PC-9 (cell line): ENCODE measurements at regions of chr16 and their contacts with region 1.

Region 1: GRCh38 chr16:84785843-84786581 is 33.8 kb upstream of the CRISPLD2 start:
- DNase-seq: peak; percentile 75 to 93
- H3K4me3 ChIP-seq: no peak overlapping the region
- H3K27ac ChIP-seq: peak overlapping the region; percentile 21; the same call in 1 of the 2 replicates
- H3K4me1 ChIP-seq: peaks cover 26% of the 10 kb centered on the region
- H3K27me3 ChIP-seq: no peaks in the 10 kb centered on the region
- CTCF ChIP-seq: no peak

Region 2: GRCh38 chr16:83971165-83972130 is 814.6 kb before region 1 on chr16:
- CTCF ChIA-PET with region 1: no interaction called
- POLR2A ChIA-PET with region 1: no interaction called
- intact Hi-C with region 1: no loop called
- DNase-seq: no peak
- H3K4me3 ChIP-seq: no peak overlapping the region
- H3K27ac ChIP-seq: no peak overlapping the region
- H3K4me1 ChIP-seq: no peaks in the 10 kb centered on the region
- H3K27me3 ChIP-seq: no peaks in the 10 kb centered on the region
- CTCF ChIP-seq: no peak

Region 3: DNA sequence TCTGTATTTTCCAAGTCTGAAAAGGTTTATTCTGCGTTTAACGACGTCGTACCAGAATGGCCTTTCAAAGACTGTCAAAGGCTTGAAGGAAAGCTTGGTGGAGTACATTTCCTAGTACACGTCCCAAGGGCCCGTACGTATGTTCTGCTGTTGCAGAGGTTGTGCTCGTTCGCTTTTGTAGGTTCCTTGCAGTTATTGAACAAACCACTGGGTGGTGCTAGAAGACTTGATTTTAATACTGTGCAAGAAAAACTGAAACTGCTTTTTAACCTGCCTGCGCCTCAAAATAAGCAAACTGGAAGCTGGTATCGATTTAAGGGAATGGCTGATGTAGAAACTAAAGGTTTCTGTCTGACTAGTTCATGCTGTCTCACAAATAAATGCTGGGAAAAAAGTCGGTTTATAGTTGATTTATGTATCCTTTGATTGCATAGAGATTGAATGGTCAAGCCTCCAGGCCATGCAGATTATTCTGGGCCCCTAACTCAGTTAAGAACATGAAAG is 31.6 kb before region 1 on chr16:
- CTCF ChIA-PET with region 1: interaction called, 10 read pairs
- POLR2A ChIA-PET with region 1: no interaction called
- intact Hi-C with region 1: no loop called
- DNase-seq: peak; percentile 61 to 75
- H3K4me3 ChIP-seq: no peak overlapping the region
- H3K27ac ChIP-seq: peak overlapping the region; percentile 22
- H3K4me1 ChIP-seq: peaks cover 11% of the 10 kb centered on the region; the same call in 1 of the 2 replicates
- H3K27me3 ChIP-seq: no peaks in the 10 kb centered on the region
- CTCF ChIP-seq: peak; percentile 92

Region 4: DNA sequence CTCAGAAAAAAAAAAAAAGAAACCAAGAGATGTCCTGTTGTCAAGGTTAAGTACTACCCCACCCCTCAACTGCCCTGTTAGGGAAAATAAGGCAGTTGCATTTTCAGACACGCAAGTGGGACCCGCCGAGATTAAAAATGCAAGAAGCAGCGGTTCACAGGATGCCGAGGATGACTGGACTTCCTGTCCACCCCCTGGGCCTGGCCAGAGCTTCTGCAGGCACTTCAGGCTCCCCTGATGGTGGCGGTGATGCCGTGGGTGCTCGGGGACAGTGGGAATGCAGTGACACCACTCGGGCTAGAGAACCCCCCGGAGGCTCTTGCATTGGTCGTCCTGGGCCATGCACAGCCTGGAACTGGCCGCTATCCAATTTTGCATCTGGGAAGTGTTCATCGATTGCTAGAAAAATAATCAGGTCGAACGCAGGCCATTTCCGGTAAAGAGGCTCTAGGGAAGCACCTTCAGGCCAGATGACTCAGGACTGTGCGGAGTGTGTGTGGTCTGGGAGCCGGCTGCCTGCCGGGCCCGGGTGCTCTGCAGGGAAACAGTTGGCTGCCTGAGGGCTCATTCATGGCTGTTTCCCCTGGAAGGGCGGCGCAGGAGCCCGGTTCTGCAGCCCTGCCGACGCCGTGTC is 20.4 kb after region 1 on chr16:
- CTCF ChIA-PET with region 1: interaction called, 7 read pairs
- POLR2A ChIA-PET with region 1: no interaction called
- intact Hi-C with region 1: loop called (anchors 1 kb)
- DNase-seq: peak; percentile 76 to 86
- H3K4me3 ChIP-seq: peak overlapping the region; percentile 61
- H3K27ac ChIP-seq: peak overlapping the region; percentile 38
- H3K4me1 ChIP-seq: peaks cover 18% of the 10 kb centered on the region
- H3K27me3 ChIP-seq: no peaks in the 10 kb centered on the region
- CTCF ChIP-seq: no peak

Region 5: DNA sequence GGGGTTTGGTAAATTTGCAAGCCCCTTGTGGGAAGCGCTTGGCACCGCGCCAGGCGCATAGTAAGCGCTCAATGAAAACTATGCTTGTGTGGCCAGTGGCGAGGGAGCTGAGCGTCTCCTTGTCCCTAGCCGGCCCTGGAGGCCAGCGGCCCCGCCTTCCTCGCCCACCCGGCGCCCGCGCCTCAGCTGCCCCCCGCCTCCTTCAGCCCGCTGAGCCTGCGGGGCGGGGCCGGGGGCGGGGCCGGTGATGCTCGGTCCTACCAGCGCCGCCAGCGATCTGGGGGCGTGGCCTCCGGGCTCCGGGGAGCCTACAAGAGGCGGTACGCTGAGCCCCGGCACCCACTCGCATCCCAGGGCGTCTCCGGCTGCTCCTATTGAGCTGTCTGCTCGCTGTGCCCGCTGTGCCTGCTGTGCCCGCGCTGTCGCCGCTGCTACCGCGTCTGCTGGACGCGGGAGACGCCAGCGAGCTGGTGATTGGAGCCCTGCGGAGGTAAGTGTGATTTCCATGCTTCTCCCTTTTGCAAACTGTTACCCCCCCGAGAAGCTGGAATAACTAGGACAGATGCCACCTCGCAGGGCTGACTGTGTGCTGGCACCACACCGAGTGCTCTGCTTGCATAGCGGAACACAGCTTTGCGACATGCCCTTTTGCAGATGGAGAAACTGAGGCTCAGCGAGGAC is 33.8 kb after region 1 on chr16 and contains the start of gene CRISPLD2:
- CTCF ChIA-PET with region 1: no interaction called
- POLR2A ChIA-PET with region 1: no interaction called
- intact Hi-C with region 1: loop called (anchors 1 kb)
- DNase-seq: peak; percentile 85 to 94
- H3K4me3 ChIP-seq: peak within 1 kb of the TSS; percentile 59
- H3K27ac ChIP-seq: no peak within 1 kb of the TSS
- H3K4me1 ChIP-seq: peaks cover 27% of the 10 kb centered on the region
- H3K27me3 ChIP-seq: no peaks in the 10 kb centered on the region
- CTCF ChIP-seq: no peak
- total RNA-seq, gene CRISPLD2: 18.6 and 19.9 TPM in 2 replicates

Region 6: GRCh38 chr16:84841770-84842300 is 55.8 kb after region 1 on chr16:
- CTCF ChIA-PET with region 1: no interaction called
- POLR2A ChIA-PET with region 1: no interaction called
- intact Hi-C with region 1: loop called (anchors 1 kb)
- DNase-seq: peak; percentile 87 to 92
- H3K4me3 ChIP-seq: no peak overlapping the region; the same call in 1 of the 2 replicates
- H3K27ac ChIP-seq: peak overlapping the region; percentile 80
- H3K4me1 ChIP-seq: peaks cover 48% of the 10 kb centered on the region
- H3K27me3 ChIP-seq: no peaks in the 10 kb centered on the region
- CTCF ChIP-seq: no peak

Region 7: DNA sequence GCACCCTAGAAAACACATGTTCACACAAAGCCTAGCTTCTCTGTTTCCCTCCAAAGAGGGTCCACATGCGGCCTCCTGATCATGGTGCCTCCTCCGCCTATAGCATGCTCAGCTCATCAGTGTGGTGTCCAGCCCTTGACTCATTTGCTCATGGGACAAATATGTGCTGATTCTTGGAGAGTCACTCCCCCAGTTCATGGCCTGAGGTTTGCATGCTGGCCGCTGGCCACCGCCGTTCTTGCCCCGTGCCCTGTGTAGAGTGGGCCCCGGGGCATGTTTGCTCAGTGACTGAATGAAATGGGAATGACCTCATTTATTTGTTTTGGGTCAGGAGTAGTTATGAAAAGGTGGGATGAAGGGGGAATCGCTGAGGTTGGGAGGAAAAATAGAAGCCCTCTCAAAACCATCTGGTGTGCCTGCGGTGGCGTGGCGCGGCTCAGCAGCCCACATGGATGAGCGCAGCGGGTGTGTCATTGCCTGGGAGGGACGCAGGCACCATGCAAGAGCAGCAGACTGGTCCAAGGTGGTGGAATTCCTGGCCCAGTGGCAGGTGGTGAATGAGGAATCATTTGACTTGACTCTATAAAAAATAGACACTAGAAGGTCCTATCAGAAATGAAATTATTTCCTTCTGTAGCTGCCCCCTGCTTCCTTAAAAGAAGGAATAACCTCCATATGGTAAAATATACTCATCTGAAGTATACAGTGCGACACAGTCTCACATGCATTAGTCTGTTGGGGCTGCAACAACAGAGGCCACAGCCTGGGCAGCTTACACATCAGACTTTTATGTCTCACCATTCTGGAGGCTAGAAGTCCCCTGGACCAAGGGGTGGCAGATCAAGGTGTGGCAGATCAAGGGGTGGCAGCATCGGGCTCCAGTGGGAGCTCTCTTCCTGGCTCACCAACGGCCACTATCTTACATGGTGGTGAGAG is 65.4 kb after region 1 on chr16:
- CTCF ChIA-PET with region 1: no interaction called
- POLR2A ChIA-PET with region 1: no interaction called
- intact Hi-C with region 1: loop called (anchors 1 kb)
- DNase-seq: peak; percentile 95 to 96
- H3K4me3 ChIP-seq: no peak overlapping the region
- H3K27ac ChIP-seq: peak overlapping the region; percentile 39
- H3K4me1 ChIP-seq: peaks cover 24% of the 10 kb centered on the region
- H3K27me3 ChIP-seq: no peaks in the 10 kb centered on the region
- CTCF ChIP-seq: no peak

Region 8: DNA sequence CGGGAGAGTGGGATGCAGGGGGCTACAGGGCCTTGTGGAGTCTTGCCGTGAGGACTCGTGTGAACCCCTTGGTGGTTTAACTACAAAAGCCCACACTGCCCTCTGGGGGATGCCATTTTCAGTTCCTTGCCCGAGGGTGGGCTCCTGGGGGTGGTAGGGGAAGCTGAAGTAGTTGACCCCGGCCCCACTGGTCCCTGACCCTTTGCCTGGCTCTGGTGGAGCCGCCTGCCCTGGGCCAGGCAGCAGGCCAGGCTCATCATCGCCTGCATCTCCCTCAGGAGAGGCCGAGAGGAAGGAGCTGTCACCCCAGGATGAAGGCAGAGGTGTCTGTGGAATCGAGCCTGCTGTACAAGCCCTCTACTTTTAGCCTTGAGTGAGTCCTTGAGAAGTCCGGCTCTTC is 1023.6 kb after region 1 on chr16:
- CTCF ChIA-PET with region 1: no interaction called
- POLR2A ChIA-PET with region 1: no interaction called
- intact Hi-C with region 1: no loop called
- DNase-seq: no peak
- H3K4me3 ChIP-seq: no peak overlapping the region
- H3K27ac ChIP-seq: no peak overlapping the region
- H3K4me1 ChIP-seq: no peaks in the 10 kb centered on the region
- H3K27me3 ChIP-seq: peaks cover 32% of the 10 kb centered on the region
- CTCF ChIP-seq: no peak